PC-9 (cell line): ENCODE measurements at regions of chr11 and their contacts with region 1.

Region 1: DNA sequence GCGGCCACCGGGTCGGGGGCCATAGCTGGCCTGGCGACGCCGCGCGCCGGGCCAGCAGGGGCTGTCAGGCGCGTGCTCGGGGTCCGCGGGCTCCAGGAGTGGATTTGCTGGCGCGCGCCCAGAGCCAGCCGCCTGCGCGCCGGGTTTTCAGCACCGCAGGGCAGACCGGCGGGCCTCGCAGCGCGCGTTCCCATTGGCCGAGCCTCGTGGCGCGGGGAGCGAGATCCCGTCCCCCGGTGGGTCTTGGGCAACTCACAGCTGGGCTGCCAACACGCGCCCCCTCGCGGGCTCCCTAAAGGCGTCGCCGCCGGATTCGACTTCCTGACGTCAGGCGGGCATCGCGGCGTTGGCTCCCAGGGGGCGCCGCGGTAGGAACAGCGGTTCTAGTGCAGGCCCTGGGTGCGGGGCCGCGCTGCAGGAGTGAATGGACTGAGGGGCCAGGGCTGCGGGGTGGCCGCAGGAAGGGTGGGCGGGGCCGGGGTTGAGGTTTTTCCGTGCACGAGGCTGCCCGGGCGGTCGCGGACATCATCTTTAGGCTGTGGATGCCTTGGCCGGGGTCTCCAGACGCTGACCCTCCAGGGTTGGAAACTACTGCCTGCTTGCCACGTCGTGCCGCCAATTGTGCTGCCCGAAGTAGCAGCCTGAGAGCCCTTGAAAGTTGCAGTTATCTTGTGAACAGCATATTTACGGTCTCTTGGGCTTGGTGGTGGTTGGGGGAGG is at the start of gene FADS1:
- DNase-seq: peak; percentile 88 to 96
- H3K4me3 ChIP-seq: peak within 1 kb of the TSS; percentile 95
- H3K27ac ChIP-seq: peak within 1 kb of the TSS; percentile 80
- H3K4me1 ChIP-seq: peaks cover 42% of the 10 kb centered on the region
- H3K27me3 ChIP-seq: no peaks in the 10 kb centered on the region
- CTCF ChIP-seq: peak; percentile 71
- total RNA-seq, gene FADS1: 114 and 150 TPM in 2 replicates

Region 2: DNA sequence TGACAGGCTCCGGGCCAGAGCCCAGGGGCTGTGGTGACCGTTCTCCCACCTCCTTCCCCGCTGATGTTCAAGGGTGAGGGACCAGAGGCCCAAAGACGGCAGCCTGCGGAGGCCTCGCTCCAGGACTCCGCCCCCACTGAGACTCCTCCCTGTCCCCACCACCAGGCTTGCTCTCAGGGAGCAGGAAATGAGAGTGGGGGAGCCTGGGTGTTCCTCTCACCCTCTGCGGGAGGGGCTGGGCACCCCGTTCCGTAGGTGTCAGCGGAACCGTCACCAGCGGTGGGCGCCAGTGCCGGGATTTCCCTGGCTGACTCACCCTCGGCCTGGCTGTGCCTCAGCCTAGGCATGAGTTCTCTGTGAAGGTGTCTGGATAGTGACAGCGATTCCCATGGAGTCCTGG is 121.0 kb before region 1 on chr11:
- CTCF ChIA-PET with region 1: no interaction called
- POLR2A ChIA-PET with region 1: interaction called, 12 read pairs
- intact Hi-C with region 1: no loop called
- DNase-seq: peak; percentile 91 to 94
- H3K4me3 ChIP-seq: peak overlapping the region; percentile 34; the same call in 1 of the 2 replicates
- H3K27ac ChIP-seq: peak overlapping the region; percentile 96
- H3K4me1 ChIP-seq: peaks cover 73% of the 10 kb centered on the region
- H3K27me3 ChIP-seq: no peaks in the 10 kb centered on the region
- CTCF ChIP-seq: no peak

Region 3: DNA sequence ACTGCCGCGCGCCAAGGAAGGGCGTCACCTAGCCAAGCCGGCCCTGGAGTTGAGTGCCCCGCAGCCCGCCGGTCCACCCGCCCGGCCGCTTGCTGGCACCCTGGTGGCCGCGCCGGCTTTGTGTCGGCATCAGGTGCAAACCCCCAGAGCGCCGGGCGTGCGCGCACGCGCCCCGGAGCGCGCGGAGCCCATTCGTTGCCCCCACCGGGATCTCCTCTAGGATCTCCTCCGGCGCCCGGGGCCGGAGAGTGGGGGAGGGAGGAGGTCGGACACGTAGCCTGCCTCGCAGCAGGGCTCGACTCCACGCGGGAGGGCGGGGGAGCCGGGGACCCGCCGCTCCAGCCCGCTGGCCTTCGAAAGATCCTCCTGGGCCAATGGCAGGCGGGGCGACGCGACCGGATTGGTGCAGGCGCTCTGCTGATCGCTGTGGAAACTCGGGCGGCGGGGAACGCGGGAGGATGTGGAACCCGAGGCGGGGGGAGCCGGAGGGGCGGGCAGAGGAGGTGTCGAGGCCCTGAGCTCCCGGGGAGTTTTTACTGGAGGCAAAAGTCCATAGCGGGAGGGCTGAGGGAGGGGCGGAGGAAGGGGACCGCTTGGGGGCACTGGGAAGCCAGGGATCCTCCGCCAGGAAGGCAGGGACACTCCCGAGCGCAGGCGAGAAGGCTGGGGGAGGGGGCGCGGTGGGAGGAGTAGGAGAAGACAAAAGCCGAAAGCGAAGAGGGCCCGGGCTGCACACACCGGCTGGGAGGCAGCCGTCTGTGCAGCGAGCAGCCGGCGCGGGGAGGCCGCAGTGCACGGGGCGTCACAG is 10.9 kb after region 1 on chr11 and contains the start of gene FADS2:
- CTCF ChIA-PET with region 1: interaction called, 3 read pairs
- POLR2A ChIA-PET with region 1: interaction called, 22 read pairs
- intact Hi-C with region 1: loop called (anchors 1 kb)
- DNase-seq: peak in 1 of 2 experiments; percentile 92
- H3K4me3 ChIP-seq: no peak within 1 kb of the TSS
- H3K27ac ChIP-seq: no peak within 1 kb of the TSS
- H3K4me1 ChIP-seq: no peaks in the 10 kb centered on the region
- H3K27me3 ChIP-seq: no peaks in the 10 kb centered on the region
- CTCF ChIP-seq: no peak
- total RNA-seq, gene FADS2: 223 and 514 TPM in 2 replicates

Region 4: GRCh38 chr11:61891331-61892084 is 74.6 kb after region 1 on chr11 and contains the start of gene FADS3:
- CTCF ChIA-PET with region 1: no interaction called
- POLR2A ChIA-PET with region 1: no interaction called
- intact Hi-C with region 1: loop called (anchors 1 kb)
- DNase-seq: peak; percentile 75 to 96
- H3K4me3 ChIP-seq: peak within 1 kb of the TSS; percentile 94
- H3K27ac ChIP-seq: no peak within 1 kb of the TSS
- H3K4me1 ChIP-seq: peaks cover 12% of the 10 kb centered on the region
- H3K27me3 ChIP-seq: no peaks in the 10 kb centered on the region
- CTCF ChIP-seq: no peak
- total RNA-seq, gene FADS3: 74.0 and 75.5 TPM in 2 replicates

Region 5: DNA sequence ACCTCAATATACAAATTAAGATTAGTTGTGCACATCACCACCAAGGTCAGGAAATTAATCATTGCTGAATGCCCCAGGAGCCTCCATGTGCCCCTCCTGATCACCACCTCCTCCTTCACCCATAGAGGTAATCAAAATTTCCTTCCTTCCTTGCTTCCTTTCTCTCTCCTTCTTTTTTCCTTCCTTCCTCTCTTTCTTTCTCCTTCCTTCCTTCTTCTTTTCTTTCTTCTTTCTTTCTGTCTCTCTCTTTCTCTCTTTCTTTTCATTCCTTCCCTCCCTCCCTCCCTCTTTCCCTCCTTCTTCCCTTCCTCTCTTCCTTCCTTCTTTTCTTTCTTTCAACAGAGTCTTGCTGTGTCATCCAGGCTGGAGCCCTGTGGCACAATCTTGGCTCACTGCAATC is 218.4 kb after region 1 on chr11:
- CTCF ChIA-PET with region 1: no interaction called
- POLR2A ChIA-PET with region 1: interaction called, 17 read pairs
- intact Hi-C with region 1: no loop called
- DNase-seq: no peak
- H3K4me3 ChIP-seq: no peak overlapping the region
- H3K27ac ChIP-seq: no peak overlapping the region
- H3K4me1 ChIP-seq: peaks cover 3% of the 10 kb centered on the region; the same call in 1 of the 2 replicates
- H3K27me3 ChIP-seq: no peaks in the 10 kb centered on the region
- CTCF ChIP-seq: no peak

Region 6: DNA sequence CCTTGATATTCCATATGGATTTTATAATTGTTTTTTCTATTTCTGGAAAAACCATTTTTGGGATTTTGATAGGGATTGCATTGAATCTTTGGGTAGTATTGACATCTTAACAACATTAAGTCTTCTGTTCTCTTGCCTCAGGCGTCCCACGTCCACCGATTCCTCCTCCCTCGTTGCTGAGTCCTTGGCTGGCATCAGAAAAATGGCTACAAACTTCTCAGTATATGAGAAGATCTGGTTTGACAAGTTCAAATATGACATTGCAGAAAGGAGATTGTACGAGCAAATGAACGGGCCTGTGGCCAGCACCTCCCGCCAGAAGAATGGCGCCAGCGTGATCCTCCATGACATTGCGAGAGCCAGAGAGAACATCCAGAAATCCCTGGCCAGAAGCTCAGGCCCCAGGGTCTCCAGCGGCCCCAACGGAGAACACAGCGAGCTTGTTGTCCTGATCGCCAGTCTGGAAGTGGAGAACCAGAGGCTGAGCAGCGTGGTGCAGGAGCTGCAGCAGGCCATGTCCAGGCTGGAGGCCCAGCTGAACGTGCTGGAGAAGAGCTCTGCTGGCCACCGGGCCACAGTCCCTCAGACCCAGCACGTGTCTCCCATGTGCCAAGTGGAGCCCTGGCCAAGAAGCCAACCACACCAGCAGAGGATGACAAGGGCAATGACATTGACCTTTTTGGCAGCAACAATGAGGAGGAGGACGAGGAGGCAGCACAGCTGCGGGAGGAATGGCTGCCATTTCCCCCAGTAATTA is 352.4 kb after region 1 on chr11:
- CTCF ChIA-PET with region 1: no interaction called
- POLR2A ChIA-PET with region 1: no interaction called
- intact Hi-C with region 1: no loop called
- DNase-seq: no peak
- H3K4me3 ChIP-seq: no peak overlapping the region
- H3K27ac ChIP-seq: no peak overlapping the region
- H3K4me1 ChIP-seq: no peaks in the 10 kb centered on the region
- H3K27me3 ChIP-seq: peaks cover 99% of the 10 kb centered on the region
- CTCF ChIP-seq: no peak